Activated B cell treated with CpG ODN at 0.5 μM for 24 hours (primary cell): ENCODE measurements at regions of chr7 and their contacts with region 1.

Region 1: DNA sequence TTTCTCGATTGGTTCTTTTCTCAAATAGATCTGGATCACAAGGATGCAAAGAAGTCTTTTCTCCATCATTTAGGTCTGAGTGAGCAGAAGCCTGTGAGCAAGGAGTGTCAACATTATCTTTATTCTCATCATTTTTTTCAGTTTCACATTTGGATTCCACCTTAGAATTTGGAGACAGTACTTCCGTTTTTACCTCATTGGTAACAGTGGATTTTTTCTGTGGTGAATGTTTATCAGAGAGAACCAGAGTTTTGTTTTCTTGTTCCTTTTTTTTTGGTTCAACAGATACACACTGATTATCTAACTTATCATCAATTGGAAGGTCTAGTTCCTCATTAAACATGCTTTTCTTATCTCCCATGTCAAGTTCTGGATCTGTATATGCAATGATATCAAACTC is 151.3 kb downstream of the GALNT11 start:
- DNase-seq: no peak
- ATAC-seq: peak; percentile 45
- H3K4me3 Mint-ChIP-seq: peak overlapping the region; percentile 17
- H3K27ac Mint-ChIP-seq: peak overlapping the region; percentile 69
- H3K4me1 Mint-ChIP-seq: peaks cover 20% of the 10 kb centered on the region
- H3K27me3 Mint-ChIP-seq: no peaks in the 10 kb centered on the region
- CTCF ChIP-seq: no peak

Region 2: DNA sequence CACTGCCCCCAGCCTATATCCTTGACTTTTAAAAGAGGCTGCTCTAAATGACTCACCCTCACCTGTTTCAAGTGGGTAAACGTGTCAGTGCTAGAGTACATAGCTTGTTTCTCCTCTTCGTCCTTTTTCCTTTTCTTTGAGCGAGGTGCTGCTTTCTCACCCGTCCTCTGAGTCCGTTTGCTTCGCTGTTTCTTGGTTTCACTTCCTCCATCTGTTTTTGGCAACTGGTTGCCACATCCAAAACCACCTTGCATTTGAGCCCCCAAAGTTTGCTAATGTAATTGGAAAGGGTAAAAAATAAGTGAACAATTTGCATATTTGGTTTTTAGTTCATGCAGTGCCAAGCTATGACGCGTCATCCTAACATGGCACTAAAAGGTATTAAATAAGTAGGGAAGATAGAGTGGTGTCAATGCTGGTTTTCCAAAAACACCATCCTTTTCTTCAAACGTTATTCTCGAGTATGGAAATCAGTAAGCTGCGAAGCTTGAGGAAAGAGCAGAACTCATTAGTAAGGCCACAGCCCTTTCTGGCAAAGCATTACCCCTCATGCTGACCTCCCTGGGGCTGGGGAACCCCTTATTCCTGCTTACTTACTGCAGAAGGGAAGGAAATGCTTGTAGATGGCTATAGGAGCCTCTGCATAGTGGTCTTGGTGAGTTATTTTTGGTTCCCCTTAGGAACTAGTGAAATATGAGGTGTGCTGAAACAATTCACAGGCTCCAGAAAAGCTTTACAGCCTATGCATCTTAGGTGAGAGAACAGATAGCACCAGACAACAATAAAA is 17.8 kb before region 1 on chr7:
- CTCF ChIA-PET with region 1: no interaction called
- POLR2A ChIA-PET with region 1: interaction called, 15 read pairs
- intact Hi-C with region 1: loop called (anchors 2 kb)
- DNase-seq: peak; percentile 34
- ATAC-seq: peak; percentile 86
- H3K4me3 Mint-ChIP-seq: peak overlapping the region; percentile 39
- H3K27ac Mint-ChIP-seq: peak overlapping the region; percentile 83
- H3K4me1 Mint-ChIP-seq: peaks cover 41% of the 10 kb centered on the region
- H3K27me3 Mint-ChIP-seq: no peaks in the 10 kb centered on the region
- CTCF ChIP-seq: no peak

Region 3: GRCh38 chr7:152193880-152194279 is 17.1 kb after region 1 on chr7:
- CTCF ChIA-PET with region 1: no interaction called
- POLR2A ChIA-PET with region 1: no interaction called
- intact Hi-C with region 1: loop called (anchors 2 kb)
- DNase-seq: no peak
- ATAC-seq: no peak
- H3K4me3 Mint-ChIP-seq: no peak overlapping the region
- H3K27ac Mint-ChIP-seq: no peak overlapping the region
- H3K4me1 Mint-ChIP-seq: no peaks in the 10 kb centered on the region
- H3K27me3 Mint-ChIP-seq: no peaks in the 10 kb centered on the region
- CTCF ChIP-seq: no peak

Region 4: DNA sequence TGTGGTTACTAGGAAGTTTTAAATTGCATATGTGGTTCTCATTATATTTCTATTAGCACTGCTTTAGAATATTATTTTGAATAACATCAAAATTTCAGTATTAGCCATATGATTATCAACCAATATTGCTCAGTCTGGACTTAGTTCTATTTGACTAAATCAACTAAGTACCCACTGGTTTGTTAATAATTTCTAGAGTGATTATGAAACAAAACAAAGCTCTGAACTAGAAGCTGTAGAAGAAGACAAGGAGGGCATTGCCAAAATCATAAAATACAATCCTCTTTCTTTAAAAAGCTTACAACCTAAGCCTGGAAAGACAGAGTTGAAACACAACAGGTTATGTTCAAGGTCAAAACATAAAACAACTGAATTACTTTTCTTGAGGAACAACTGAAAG is 54.3 kb after region 1 on chr7:
- CTCF ChIA-PET with region 1: no interaction called
- POLR2A ChIA-PET with region 1: no interaction called
- intact Hi-C with region 1: no loop called
- DNase-seq: no peak
- ATAC-seq: no peak
- H3K4me3 Mint-ChIP-seq: no peak overlapping the region
- H3K27ac Mint-ChIP-seq: no peak overlapping the region
- H3K4me1 Mint-ChIP-seq: peaks cover 4% of the 10 kb centered on the region
- H3K27me3 Mint-ChIP-seq: no peaks in the 10 kb centered on the region
- CTCF ChIP-seq: no peak